Ascending aorta (tissue), 2 donors: ENCODE measurements at regions of chr5 and their contacts with region 1.

Region 1: DNA sequence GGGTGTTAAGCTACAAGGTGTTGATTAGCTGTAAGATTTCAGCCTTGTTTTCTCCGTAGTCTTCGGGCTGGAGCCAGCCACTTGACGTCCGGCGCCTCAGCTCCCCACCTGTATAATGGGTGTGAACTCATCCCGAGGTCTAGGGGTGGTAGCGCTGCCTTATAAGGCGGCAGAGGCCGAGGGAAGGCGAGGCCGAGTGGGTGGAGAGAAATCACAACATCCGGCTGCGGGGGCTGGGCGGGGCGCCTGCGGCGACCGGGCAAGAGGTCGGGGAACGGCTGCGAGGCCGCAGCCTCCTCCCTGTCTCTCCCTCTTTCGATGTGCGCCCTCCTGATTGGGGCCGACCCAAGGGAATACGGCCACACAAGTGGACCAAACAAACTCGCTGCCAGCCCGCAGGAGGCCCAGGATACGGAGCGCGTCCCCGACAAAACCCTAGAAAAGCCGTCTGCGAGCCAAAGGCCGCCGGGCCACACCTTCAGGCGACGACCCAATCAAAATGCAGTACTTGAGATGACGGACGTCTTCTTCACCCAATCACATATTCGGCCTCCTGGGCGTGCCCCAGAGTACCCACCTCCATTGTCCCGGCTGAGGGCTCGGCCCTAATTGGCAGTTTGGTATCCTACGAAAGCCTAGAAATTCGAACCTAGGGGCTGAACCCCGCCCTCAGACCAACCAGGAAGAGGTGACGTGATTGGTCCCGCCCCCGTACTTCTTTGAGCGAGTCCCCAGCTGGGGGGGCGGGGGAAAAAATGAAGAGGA is 493 bp upstream of the GRK6 start:
- DNase-seq: peak; percentile 100
- H3K4me3 ChIP-seq: peak overlapping the region; percentile 46 to 62
- H3K27ac ChIP-seq: peak overlapping the region; percentile 82 to 83
- H3K4me1 ChIP-seq: peaks cover 14 to 15% of the 10 kb centered on the region in 2 donors
- H3K27me3 ChIP-seq: no peaks in the 10 kb centered on the region
- CTCF ChIP-seq: no peak

Region 2: DNA sequence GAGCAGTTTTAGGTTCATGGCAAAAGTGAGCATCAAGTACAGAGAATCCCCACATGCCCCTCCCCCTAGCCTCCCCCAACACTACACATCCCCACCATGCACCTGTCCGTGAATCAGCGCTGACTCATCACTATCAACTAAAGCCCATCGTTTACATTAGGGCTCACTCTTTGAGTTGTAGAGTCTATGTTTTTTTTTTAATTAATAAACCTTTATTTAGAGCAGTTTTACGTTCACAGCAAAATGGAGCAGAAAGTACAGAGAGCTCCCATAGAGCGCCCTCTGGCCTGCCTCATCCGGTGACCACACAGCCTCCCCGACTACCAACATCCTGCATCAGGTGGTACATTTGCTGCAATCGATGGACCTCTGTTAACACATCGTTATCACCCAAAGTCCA is 663.5 kb before region 1 on chr5:
- intact Hi-C with region 1: no loop called
- DNase-seq: peak in 1 of 2 donors; percentile 18
- H3K4me3 ChIP-seq: no peak overlapping the region
- H3K27ac ChIP-seq: no peak overlapping the region
- H3K4me1 ChIP-seq: no peaks in the 10 kb centered on the region
- H3K27me3 ChIP-seq: no peaks in the 10 kb centered on the region
- CTCF ChIP-seq: no peak

Region 3: DNA sequence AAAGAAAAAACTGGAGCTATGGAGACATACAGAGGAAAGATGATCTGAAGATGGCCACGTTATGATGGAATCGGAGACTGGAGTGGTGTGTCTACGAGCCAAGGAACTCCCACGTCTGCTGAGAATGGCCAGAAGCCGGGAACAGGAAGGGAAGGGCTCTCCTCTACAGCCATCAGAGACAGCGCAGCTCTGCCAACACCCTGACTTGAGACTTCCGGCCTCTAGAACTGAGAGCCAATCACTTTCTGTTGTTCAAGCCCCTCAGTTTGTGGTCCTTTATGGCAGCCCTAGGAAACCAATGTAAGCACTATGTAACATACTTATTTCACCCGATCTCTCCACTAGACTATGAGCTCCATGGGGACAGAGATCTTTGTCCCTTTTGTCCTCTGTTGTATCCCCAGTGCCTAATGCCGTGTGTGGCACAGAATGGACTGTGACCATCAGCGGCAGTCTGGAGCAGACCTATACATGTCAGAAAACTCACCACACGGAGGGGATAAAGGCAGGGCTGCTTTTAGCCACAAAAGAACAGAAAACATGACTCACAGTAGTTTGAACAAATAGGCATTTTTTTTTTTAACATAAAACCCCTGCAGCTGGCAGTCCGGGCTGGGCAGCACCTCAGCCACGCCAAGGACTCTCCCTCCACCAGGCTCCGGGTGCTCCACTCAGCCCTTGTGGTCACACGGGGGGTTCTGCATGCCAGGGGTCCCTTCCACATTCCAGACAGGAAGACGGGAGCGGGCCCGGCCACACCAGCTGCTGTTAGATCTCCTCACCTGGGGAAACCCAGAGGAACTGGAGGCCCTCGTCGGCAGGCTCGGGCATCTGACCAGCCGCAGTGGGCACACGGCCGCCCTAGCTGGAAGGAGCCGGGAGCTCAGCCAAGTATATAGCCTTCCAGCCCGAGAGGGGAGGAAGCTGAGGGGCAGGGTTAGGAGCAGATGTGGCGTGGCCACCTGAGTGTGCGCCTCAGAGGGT is 98.2 kb before region 1 on chr5:
- intact Hi-C with region 1: no loop called
- DNase-seq: no peak
- H3K4me3 ChIP-seq: no peak overlapping the region
- H3K27ac ChIP-seq: peak overlapping the region; percentile 19 to 32
- H3K4me1 ChIP-seq: no peaks in the 10 kb centered on the region
- H3K27me3 ChIP-seq: no peaks in the 10 kb centered on the region
- CTCF ChIP-seq: no peak

Region 4: GRCh38 chr5:177351385-177352329 is 74.3 kb before region 1 on chr5 and contains the start of gene LMAN2:
- intact Hi-C with region 1: loop called (anchors 1 kb)
- DNase-seq: peak; percentile 76 to 96
- H3K4me3 ChIP-seq: peak within 1 kb of the TSS; percentile 68 to 71
- H3K27ac ChIP-seq: peak within 1 kb of the TSS; percentile 81 to 94
- H3K4me1 ChIP-seq: peaks cover 7 to 24% of the 10 kb centered on the region in 2 donors
- H3K27me3 ChIP-seq: no peaks in the 10 kb centered on the region
- CTCF ChIP-seq: no peak
- total RNA-seq, gene LMAN2: 229 TPM

Region 5: GRCh38 chr5:177366528-177367322 is 59.3 kb before region 1 on chr5:
- intact Hi-C with region 1: loop called (anchors 2 kb)
- DNase-seq: peak; percentile 63 to 94
- H3K4me3 ChIP-seq: peak overlapping the region; percentile 41 to 62
- H3K27ac ChIP-seq: peak overlapping the region; percentile 71 to 78
- H3K4me1 ChIP-seq: peaks cover 7 to 18% of the 10 kb centered on the region in 2 donors
- H3K27me3 ChIP-seq: no peaks in the 10 kb centered on the region
- CTCF ChIP-seq: no peak

Region 6: DNA sequence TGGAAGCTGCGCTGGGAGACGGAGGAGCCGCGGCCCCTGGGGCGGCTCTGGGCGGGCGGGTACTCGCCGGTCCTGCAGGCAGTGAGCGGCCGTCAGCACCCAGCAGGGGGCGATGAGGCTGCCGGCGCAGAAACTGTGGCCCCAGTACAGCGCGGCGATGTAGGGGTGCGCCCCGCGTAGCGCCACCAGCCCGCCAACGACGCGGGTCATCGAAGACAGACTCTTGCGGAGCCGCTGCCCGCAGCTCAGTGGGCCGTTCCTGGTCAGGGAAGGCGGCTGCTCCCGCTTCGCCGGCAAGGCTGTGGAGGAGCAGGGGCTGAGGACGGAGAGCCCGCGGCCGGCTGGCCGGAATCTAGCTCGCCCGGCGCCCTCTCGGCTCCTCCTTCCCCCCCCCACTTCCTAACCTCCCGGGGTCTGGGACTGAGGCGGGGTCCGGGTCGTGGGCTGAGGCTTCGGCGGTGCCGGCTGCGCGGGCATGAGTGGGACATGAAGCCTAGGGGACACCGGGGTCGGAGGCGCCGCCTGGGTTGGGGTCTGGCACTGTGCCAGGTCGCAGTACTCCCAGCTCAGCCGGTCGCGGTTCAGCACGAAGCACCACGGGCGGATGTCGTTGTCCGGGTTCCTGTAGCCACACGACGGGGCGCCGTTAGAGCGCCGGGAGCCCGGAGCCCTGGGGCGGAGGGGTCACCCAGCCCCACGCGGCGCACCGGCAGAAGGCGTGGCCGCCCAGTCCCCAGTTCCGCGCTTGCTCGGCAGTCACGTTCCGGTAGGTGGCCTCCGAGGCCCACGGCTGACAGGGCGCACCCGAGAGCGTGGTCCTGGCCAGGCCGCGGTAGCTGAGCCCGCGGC is 22.0 kb before region 1 on chr5:
- intact Hi-C with region 1: loop called (anchors 1 kb)
- DNase-seq: peak in 1 of 2 donors; percentile 89
- H3K4me3 ChIP-seq: peak overlapping the region; percentile 52 to 85
- H3K27ac ChIP-seq: no peak overlapping the region
- H3K4me1 ChIP-seq: peaks cover 17 to 24% of the 10 kb centered on the region in 2 donors
- H3K27me3 ChIP-seq: peaks cover 41% of the 10 kb centered on the region
- CTCF ChIP-seq: peak; percentile 75 to 87 (median 79)

Region 7: GRCh38 chr5:177446200-177447065 is 20.4 kb after region 1 on chr5 and contains the start of gene PRR7:
- intact Hi-C with region 1: loop called (anchors 1 kb)
- DNase-seq: no peak
- H3K4me3 ChIP-seq: peak within 1 kb of the TSS; percentile 59 to 70
- H3K27ac ChIP-seq: no peak within 1 kb of the TSS
- H3K4me1 ChIP-seq: peaks cover 17 to 24% of the 10 kb centered on the region in 2 donors
- H3K27me3 ChIP-seq: no peaks in the 10 kb centered on the region
- CTCF ChIP-seq: peak in 1 of 3 experiments; percentile 21
- total RNA-seq, gene PRR7: 18.1 TPM

Region 8: GRCh38 chr5:177454397-177455035 is 28.5 kb after region 1 on chr5:
- intact Hi-C with region 1: loop called (anchors 1 kb)
- DNase-seq: peak; percentile 62 to 97
- H3K4me3 ChIP-seq: peak overlapping the region; percentile 53 to 92
- H3K27ac ChIP-seq: peak overlapping the region; percentile 68 to 86
- H3K4me1 ChIP-seq: peaks cover 18 to 22% of the 10 kb centered on the region in 2 donors
- H3K27me3 ChIP-seq: no peaks in the 10 kb centered on the region
- CTCF ChIP-seq: peak; percentile 96 to 97 (median 96)

Region 9: GRCh38 chr5:178204182-178204894 is 778.4 kb after region 1 on chr5 and contains the start of gene HNRNPAB:
- intact Hi-C with region 1: loop called (anchors 10 kb)
- DNase-seq: peak; percentile 82 to 97
- H3K4me3 ChIP-seq: peak within 1 kb of the TSS; percentile 97 to 100
- H3K27ac ChIP-seq: peak within 1 kb of the TSS; percentile 92 to 96
- H3K4me1 ChIP-seq: peaks cover 8 to 17% of the 10 kb centered on the region in 2 donors
- H3K27me3 ChIP-seq: no peaks in the 10 kb centered on the region
- CTCF ChIP-seq: no peak
- total RNA-seq, gene HNRNPAB: 99.2 TPM